Activated CD4-positive, alpha-beta T cell treated with anti-CD3 and anti-CD28 coated beads, Interleukin-2, amount 10 ng/mL, durations not matched to agents 7 days and 5 days (primary cell): ENCODE measurements at regions of chr14 and their contacts with region 1.

Region 1: DNA sequence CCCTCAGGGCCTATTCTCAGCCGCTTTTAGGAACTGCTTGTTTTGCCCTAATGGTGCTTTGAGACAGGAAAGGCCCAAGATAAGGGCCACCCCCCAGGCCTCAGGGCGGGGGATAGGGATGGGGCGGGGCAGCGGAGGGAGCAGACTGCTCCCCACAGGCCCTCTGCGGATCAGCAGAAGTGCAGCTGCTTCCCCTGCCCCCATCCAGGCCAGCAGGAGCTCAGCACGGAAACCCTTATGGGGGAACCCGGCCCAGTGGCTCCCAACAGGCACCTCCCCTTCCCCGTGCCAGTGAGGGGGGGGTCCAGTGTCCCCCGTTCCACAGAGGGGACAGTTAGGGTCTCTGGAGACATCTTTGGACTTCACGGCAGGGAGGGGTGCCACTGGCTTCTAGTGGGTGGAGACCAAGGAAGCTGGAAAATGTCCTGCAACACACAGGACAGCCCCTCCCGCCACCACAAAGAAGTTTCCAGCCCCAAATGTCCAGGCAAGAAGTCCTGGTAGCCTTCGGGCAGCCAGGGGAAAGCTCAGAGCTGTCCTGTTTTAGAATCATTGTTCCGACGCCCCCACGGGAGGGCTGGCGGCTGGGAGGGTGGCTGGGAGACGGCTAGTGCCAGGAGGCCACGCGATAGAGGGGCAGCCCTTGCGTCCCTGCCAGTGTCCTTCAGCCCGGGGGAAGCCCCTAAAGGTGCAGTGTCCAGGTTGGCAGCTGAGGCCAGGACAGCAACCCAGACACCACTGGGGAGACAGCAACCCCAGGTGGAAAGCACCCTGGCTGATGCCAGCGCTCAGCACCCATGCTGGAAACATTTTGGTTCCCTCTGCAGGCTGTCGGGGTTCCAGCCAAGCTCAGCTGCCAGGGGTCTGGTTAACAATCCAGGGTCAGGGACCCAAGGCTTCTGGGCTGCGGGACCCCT is 10.4 kb upstream of the GPR132 start:
- DNase-seq: peak; percentile 33
- H3K4me3 Mint-ChIP-seq: no peak overlapping the region
- H3K27ac Mint-ChIP-seq: peak overlapping the region; percentile 46
- H3K4me1 Mint-ChIP-seq: peaks cover 34% of the 10 kb centered on the region
- H3K27me3 Mint-ChIP-seq: peaks cover 10% of the 10 kb centered on the region

Region 2: GRCh38 chr14:105065280-105066228 is 10.1 kb before region 1 on chr14 and contains the start of gene GPR132:
- CTCF ChIA-PET with region 1: interaction called, 12 read pairs
- POLR2A ChIA-PET with region 1: interaction called, 6 read pairs
- DNase-seq: peak; percentile 97
- H3K4me3 Mint-ChIP-seq: peak within 1 kb of the TSS; percentile 80
- H3K27ac Mint-ChIP-seq: peak within 1 kb of the TSS; percentile 94
- H3K4me1 Mint-ChIP-seq: peaks cover 73% of the 10 kb centered on the region
- H3K27me3 Mint-ChIP-seq: no peaks in the 10 kb centered on the region
- total RNA-seq, gene GPR132: 44.2 to 46.6 TPM